ENCODE measurements at regions of chr15 and their contacts with region 1.

Region 1: GRCh38 chr15:82571722-82572222 is 31.5 kb upstream of the RPS17 start:
- DNase-seq: no peak
- CTCF ChIP-seq: no peak

Region 2: GRCh38 chr15:82177291-82178010 is 394.3 kb before region 1 on chr15:
- in situ Hi-C with region 1: no loop called
- DNase-seq: no peak
- CTCF ChIP-seq: no peak

Region 3: GRCh38 chr15:82952158-82953081 is 380.6 kb after region 1 on chr15 and contains the start of gene HOMER2:
- in situ Hi-C with region 1: loop called (anchors 25 kb)
- DNase-seq: peak; percentile 52
- CTCF ChIP-seq: no peak

Region 4: DNA sequence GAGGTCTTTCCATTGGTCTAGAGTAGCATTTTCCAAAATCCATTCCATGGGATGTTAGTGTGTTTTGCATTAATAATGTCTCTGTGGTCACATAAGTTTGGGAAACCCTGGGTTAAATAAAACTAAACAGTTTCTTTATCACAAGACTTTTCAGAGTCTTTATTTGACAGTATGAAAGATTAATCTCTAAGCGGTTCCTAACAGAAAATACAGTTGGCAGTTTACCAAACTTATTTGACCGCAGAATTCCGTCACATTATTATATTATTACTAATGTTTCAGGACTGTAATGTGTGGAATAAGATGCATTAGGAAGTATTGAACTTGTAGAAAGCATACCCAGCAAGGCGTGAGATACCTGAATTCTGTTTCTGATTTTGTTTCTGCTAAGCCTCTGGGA is 1010.6 kb after region 1 on chr15:
- in situ Hi-C with region 1: no loop called
- DNase-seq: no peak
- CTCF ChIP-seq: no peak